PC-9 (cell line): ENCODE measurements at regions of chr1 and their contacts with region 1.

Region 1: DNA sequence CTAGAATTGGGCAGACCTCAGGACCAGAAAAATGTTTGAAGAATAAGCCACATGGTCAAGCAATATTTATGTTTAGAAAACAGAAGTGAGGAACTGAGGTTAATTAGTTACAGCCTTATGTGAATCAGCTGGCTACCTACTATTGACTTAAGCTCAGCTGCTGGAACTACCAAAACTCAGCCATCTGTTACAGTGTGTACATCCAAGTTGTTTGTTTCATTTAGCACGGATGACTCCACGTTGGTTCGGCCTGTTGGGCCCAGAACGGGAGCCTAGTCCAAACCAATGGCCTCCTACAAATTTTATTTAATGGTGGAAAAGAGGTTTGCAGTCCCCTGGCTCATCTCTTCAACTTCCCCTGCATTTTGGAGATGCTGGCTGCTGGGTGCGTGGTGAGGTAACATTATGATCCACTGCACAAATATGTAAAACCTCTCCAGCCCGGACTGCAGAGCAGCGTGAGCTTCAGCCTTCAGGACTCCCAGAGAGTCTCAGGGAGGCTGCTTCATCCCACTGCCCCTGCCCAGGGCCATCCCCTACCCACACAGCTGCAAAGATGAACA is 143.4 kb downstream of the ZZZ3 start:
- DNase-seq: peak; percentile 18 to 78
- H3K4me3 ChIP-seq: no peak overlapping the region
- H3K27ac ChIP-seq: peak overlapping the region; percentile 85
- H3K4me1 ChIP-seq: peaks cover 72% of the 10 kb centered on the region
- H3K27me3 ChIP-seq: no peaks in the 10 kb centered on the region
- CTCF ChIP-seq: no peak

Region 2: DNA sequence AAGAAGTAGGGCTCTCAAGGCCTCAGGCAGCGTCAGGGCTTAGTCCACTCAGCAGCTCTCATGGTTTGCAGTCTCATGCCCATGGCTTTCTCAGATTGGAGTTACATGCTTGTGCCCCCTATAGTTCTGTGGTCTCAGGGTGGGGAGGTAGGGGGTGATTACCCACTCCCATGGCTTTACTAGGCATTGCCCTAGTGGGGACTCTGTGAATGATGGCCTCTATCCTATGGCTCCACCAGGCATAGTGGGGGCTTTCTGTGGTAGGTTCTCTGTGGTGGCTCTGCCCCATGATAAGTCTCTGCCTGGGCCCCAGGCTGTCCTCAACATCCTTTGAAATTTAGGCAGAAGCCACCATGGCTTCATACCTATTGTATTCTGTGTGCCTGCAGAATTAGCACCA is 1693.5 kb before region 1 on chr1:
- CTCF ChIA-PET with region 1: no interaction called
- POLR2A ChIA-PET with region 1: interaction called, 16 read pairs
- intact Hi-C with region 1: no loop called
- DNase-seq: no peak
- H3K4me3 ChIP-seq: no peak overlapping the region
- H3K27ac ChIP-seq: no peak overlapping the region
- H3K4me1 ChIP-seq: no peaks in the 10 kb centered on the region
- H3K27me3 ChIP-seq: peaks cover 11% of the 10 kb centered on the region; the same call in 1 of the 2 replicates
- CTCF ChIP-seq: no peak

Region 3: DNA sequence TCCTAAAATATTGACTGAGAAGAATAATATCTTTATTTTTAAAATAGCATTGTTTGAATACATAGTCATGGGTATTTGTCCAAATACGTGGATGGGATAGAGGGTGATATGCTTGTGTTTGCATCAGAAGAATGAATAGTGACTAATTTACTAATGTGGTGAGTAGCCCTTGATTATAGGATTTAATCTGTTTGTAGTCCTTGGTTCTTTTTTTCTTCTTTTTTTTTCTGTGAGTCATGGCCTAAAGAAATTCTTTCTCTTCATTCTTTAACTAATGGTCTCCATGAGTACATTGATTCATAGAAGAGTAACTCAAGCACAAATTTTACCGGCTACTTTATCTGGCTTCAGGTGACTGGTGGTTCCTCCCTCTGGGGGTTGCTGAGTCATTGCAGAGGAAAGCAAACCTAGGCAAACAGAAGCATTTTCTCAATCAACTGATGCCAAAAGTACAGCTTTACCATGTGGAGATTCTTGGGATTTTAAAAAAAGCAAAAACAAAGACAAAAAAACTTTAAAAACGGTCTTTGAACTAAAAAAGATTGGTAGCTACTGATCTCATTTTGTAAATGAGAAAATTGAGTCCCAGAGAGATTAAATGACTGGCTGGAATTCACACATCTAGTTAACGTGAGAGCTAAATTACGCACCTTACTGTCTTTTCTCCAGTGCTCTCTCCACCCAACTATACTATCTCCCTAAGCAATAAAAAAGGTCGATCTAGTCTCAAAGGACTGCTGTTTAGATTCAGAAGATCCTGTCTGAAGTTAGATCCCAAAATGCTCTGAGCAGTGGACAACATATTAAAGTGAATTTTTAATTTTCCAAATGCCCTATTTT is 216.8 kb before region 1 on chr1:
- CTCF ChIA-PET with region 1: no interaction called
- POLR2A ChIA-PET with region 1: no interaction called
- intact Hi-C with region 1: loop called (anchors 2 kb)
- DNase-seq: peak; percentile 64 to 99
- H3K4me3 ChIP-seq: peak overlapping the region; percentile 28; the same call in 1 of the 2 replicates
- H3K27ac ChIP-seq: peak overlapping the region; percentile 91
- H3K4me1 ChIP-seq: peaks cover 30% of the 10 kb centered on the region
- H3K27me3 ChIP-seq: no peaks in the 10 kb centered on the region
- CTCF ChIP-seq: no peak

Region 4: GRCh38 chr1:77768006-77768405 is 229.0 kb after region 1 on chr1:
- CTCF ChIA-PET with region 1: no interaction called
- POLR2A ChIA-PET with region 1: interaction called, 27 read pairs
- intact Hi-C with region 1: no loop called
- DNase-seq: no peak
- H3K4me3 ChIP-seq: no peak overlapping the region
- H3K27ac ChIP-seq: no peak overlapping the region
- H3K4me1 ChIP-seq: no peaks in the 10 kb centered on the region
- H3K27me3 ChIP-seq: no peaks in the 10 kb centered on the region
- CTCF ChIP-seq: no peak

Region 5: GRCh38 chr1:78370356-78370755 is 831.3 kb after region 1 on chr1:
- CTCF ChIA-PET with region 1: no interaction called
- POLR2A ChIA-PET with region 1: no interaction called
- intact Hi-C with region 1: no loop called
- DNase-seq: no peak
- H3K4me3 ChIP-seq: no peak overlapping the region
- H3K27ac ChIP-seq: no peak overlapping the region
- H3K4me1 ChIP-seq: no peaks in the 10 kb centered on the region
- H3K27me3 ChIP-seq: no peaks in the 10 kb centered on the region
- CTCF ChIP-seq: no peak